ENCODE measurements at regions of chr10 and their contacts with region 1.

Region 1: DNA sequence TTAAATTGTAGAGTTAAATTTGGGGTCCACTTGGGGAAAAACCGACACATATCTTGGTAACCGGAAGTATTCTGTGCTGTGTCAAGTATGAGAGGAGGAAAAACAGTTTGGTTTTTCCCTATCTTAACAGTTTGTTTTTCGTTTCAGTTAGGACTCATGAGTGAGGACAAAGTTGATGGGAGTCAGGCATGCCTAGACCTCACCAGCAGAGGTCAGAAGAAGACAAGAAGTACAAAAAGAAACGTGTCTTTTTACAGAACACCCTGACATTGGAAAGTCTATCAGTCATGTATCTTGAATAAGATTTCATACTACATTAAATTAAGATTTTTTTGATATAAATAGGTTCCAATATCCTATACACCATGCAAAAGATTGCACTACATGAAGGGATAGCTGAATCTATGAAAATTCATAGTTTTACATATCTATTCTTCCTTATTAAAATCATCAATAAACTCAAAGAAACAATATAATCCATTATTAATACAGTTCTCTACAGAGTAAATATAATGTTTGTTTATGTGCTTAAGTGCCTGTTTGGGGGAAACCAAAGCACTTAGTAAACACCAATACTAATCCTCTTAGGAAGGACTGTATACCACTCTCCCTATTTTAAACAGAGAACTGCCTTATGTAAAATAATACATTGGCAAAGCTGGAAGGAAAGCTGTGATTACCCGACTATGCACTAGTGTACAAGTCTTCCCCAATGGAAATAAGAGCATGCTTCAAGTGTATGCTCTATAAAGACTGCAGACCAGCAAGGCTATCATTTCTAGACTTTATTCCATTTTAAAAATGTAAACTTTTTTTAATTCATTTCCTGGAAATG is 95.6 kb downstream of the USP6NL start:
- DNase-seq: no peak
- ATAC-seq: peak; percentile 85

Region 2: DNA sequence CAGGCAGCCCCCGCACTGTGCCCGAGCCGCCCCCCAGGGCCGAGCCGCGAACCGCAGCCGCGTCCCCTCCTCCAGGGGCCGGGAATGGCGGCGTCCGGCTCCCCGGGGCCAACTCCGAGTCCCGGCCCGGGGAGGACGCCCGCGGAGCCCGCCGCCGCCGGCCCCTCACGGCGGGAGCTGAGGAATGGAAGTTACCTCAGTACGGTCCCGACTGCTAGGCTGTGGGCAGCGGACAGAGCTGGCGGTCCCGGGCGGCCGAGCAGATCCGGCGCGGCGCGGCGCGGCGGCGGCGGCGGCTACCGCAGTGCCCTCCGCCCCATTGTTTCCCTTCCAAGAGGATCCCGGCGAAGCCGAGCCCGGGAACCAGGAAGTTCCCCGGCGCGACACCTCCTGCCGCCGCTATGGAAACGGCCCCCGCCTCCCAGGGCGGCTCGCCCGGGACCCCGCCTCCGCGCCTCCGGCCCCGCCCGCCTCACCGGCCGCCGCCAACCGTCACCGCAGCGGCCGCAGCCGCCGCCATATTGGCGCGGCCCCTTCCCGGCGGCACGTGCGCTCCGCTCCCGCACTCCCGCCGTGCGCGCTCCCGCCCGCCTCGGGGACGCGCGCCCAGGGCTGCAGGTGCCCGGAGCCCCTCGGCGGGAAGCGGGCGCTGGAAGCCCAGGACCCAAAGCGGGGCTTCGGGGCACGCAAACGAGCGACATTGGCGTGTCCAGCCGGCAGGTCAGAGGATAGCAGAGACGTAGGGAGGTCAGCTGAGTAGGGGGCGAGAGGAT is 95.6 kb after region 1 on chr10 and contains the start of gene USP6NL:
- intact Hi-C with region 1: loop called (anchors 5 kb)
- DNase-seq: peak; percentile 95
- ATAC-seq: peak; percentile 98
- total RNA-seq, gene USP6NL: 6.4 TPM

Region 3: GRCh38 chr10:11724938-11725776 is 209.3 kb after region 1 on chr10:
- intact Hi-C with region 1: loop called (anchors 1 kb)
- DNase-seq: no peak
- ATAC-seq: peak; percentile 75

Region 4: GRCh38 chr10:11742005-11742778 is 226.4 kb after region 1 on chr10 and contains the start of gene ECHDC3:
- intact Hi-C with region 1: loop called (anchors 5 kb)
- DNase-seq: peak; percentile 90
- ATAC-seq: peak; percentile 86
- total RNA-seq, gene ECHDC3: 101 TPM

Region 5: GRCh38 chr10:11757821-11758463 is 242.1 kb after region 1 on chr10:
- intact Hi-C with region 1: loop called (anchors 1 kb)
- DNase-seq: peak; percentile 94
- ATAC-seq: peak; percentile 86

Measured in Right ventricle myocardium inferior (tissue), 1 donor.